ENCODE measurements at regions of chr1 and their contacts with region 1.

Region 1: DNA sequence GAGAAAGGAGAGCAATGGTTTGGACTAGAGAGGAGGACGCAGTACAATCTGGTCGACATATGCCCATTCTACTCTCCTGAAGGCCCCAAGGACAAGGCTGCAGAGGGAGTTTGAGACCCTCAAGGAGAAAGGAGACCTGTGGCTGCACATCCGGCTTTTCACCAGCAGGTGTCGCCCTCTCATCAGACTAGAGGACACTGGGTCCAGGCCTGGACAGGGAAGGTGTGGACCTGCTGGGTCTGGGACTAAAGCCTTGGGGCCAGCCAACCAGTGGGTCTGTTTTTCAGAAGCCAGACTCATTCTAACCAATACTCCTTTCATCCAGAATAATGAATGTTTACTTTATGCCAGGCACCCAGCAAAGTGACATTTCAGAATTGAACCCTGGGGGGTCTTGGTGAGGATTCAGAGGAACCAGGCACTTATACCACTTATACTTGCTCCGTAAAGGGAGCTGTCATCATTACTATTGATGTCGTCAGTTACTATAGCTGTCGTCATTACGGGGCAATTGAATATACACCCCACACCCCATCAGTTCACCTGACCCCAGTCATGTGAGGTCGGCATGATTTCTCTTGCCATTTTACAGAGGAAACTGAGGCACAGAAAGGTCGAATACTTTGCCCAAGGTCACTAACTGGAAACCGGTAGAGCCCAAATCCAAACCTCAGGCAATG is 5.1 kb downstream of the SRARP start:
- DNase-seq: no peak

Region 2: DNA sequence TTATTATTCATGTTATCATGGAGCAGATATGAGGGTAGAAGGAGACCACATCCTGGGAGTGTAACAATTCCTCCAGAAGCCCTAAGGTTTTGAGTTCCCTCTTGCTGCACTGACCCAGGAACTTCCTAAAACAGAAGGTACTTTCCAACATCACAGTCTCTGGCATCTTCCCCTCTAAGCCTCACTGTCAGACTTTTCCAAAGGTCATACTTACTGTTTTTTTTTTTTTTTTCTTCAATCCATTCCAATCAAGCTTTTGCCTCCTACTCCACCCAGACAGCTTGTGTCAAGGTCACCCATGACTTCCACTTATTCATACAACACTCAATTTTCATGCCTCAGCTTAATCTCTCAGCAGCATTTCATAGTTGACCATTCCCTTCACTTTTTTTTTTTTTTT is 183.4 kb before region 1 on chr1:
- intact Hi-C with region 1: no loop called
- DNase-seq: no peak

Region 3: DNA sequence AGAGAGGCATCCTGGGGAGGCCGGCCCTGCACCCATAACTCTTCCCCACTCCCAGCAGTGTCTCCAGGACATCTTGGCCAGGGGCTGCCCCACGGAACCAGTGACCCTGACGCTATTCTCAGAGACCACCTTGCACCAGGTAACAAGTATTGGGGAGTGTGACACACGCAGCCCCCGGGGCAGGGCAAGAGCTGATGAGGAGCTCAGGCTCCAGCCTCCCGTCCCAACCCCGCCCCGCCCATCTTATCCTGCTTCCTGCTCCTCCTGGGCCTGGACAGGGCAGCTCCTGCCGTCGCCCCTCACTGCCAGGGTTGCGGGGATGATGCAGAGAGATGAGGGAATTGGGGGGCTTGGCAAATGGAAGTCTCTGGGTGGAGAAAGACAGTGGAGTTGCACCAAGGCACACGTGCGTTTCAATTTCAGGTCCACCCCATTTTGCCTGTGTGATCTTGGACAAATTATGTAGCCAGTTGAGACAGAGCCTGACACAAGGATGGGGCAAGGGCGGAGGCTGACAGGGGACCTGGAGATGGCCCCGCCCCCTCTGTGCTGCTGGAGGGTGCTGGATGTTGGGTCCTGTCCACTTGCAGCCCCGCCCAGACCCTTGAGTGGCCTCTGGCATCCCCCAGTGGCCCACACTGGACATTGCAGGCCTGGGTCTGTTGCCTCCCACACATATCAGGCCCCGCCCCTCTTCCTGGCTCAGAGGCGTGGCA is 23.4 kb after region 1 on chr1:
- intact Hi-C with region 1: loop called (anchors 1 kb)
- DNase-seq: peak; percentile 92

Region 4: GRCh38 chr1:16055613-16056520 is 46.7 kb after region 1 on chr1:
- intact Hi-C with region 1: loop called (anchors 1 kb)
- DNase-seq: peak; percentile 86

Region 5: GRCh38 chr1:16181887-16182719 is 172.9 kb after region 1 on chr1:
- intact Hi-C with region 1: loop called (anchors 5 kb)
- DNase-seq: peak; percentile 92